Activated B cell treated with CpG ODN at 0.5 μM for 24 hours (primary cell): ENCODE measurements at regions of chr12 and their contacts with region 1.

Region 1: GRCh38 chr12:122031342-122032216 is 9.9 kb downstream of the BCL7A start:
- DNase-seq: peak; percentile 61
- ATAC-seq: peak; percentile 21
- H3K4me3 Mint-ChIP-seq: no peak overlapping the region
- H3K27ac Mint-ChIP-seq: peak overlapping the region; percentile 81
- H3K4me1 Mint-ChIP-seq: peaks cover 63% of the 10 kb centered on the region
- H3K27me3 Mint-ChIP-seq: no peaks in the 10 kb centered on the region
- CTCF ChIP-seq: no peak

Region 2: GRCh38 chr12:121955258-121956235 is 76.0 kb before region 1 on chr12:
- CTCF ChIA-PET with region 1: interaction called, 4 read pairs
- POLR2A ChIA-PET with region 1: interaction called, 3 read pairs
- intact Hi-C with region 1: loop called (anchors 2 kb)
- DNase-seq: no peak
- ATAC-seq: peak; percentile 21
- H3K4me3 Mint-ChIP-seq: no peak overlapping the region
- H3K27ac Mint-ChIP-seq: no peak overlapping the region
- H3K4me1 Mint-ChIP-seq: peaks cover 21% of the 10 kb centered on the region
- H3K27me3 Mint-ChIP-seq: no peaks in the 10 kb centered on the region
- CTCF ChIP-seq: no peak

Region 3: DNA sequence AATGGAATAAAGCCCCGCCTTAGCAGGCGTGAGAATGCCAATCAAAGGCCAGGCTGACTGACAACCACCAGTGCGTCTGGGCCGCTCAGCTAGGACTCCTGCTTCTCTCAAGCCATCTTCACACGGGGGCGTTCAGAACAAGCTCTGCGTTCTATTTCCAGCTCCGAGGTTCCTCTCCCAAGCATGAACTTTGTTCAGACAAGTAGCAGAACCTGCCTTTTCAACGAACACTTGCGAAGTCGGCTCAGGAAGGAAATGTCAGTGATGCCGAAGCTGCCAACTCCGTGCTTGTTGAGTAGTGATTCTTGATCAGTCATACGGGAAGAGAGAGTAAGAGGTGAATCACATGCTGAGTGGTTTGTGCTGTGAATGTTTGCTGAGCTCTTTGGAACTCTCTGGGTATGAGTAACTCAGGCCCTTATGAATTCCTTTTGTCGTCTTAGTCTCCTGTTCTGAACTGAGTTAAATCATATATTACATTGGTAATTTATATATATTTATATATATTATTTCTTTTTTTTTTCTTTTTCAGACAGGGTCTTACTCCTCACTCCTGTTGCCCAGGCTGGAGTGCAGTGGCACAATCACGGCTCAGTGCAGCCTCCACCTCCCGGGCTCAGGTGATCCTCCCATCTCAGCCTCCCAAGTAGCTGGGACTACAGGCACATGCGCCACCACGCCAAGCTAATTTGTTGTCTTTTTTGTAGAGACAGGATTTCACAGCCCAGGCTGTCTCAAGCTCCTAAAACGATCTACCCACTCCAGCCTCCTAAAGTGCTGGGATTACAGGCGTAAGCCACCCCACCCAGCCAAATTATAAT is 39.3 kb before region 1 on chr12:
- CTCF ChIA-PET with region 1: interaction called, 10 read pairs
- POLR2A ChIA-PET with region 1: interaction called, 86 read pairs
- intact Hi-C with region 1: loop called (anchors 5 kb)
- DNase-seq: peak; percentile 48
- ATAC-seq: peak; percentile 87
- H3K4me3 Mint-ChIP-seq: peak overlapping the region; percentile 75
- H3K27ac Mint-ChIP-seq: peak overlapping the region; percentile 97
- H3K4me1 Mint-ChIP-seq: peaks cover 49% of the 10 kb centered on the region
- H3K27me3 Mint-ChIP-seq: no peaks in the 10 kb centered on the region
- CTCF ChIP-seq: no peak